ENCODE measurements at regions of chr20 and their contacts with region 1.

Region 1: GRCh38 chr20:37202267-37202943 is 23.1 kb upstream of the MROH8 start:
- DNase-seq: peak; percentile 77
- H3K4me3 ChIP-seq: no peak overlapping the region
- H3K27ac ChIP-seq: peak overlapping the region; percentile 64
- H3K4me1 ChIP-seq: peaks cover 7% of the 10 kb centered on the region
- H3K27me3 ChIP-seq: no peaks in the 10 kb centered on the region
- CTCF ChIP-seq: peak; percentile 80 to 88

Region 2: DNA sequence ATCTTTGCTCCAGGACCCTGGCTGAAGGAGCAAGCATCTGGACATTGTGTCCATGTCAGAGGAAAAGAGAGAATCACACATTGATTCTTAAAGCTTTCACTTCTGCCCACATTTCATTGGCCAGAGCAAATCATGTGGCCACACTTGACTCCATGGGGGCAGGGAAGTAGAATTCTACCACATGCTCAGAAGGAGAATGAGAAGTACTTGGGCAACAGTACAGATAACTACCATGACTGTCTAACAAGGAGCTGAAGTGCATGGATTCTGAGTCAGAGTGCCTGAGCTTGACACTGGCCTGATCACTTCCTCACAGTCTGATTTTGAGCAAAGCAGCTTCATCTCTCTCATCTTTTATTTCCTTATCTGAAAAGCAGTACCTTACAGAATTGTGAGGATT is 20.6 kb after region 1 on chr20:
- CTCF ChIA-PET with region 1: no interaction called
- dilution Hi-C with region 1: no loop called
- in situ Hi-C with region 1: no loop called
- intact Hi-C with region 1: loop called (anchors 2 kb)
- DNase-seq: peak; percentile 76
- H3K4me3 ChIP-seq: no peak overlapping the region
- H3K27ac ChIP-seq: no peak overlapping the region
- H3K4me1 ChIP-seq: peaks cover under 1% of the 10 kb centered on the region
- H3K27me3 ChIP-seq: no peaks in the 10 kb centered on the region
- CTCF ChIP-seq: no peak

Region 3: DNA sequence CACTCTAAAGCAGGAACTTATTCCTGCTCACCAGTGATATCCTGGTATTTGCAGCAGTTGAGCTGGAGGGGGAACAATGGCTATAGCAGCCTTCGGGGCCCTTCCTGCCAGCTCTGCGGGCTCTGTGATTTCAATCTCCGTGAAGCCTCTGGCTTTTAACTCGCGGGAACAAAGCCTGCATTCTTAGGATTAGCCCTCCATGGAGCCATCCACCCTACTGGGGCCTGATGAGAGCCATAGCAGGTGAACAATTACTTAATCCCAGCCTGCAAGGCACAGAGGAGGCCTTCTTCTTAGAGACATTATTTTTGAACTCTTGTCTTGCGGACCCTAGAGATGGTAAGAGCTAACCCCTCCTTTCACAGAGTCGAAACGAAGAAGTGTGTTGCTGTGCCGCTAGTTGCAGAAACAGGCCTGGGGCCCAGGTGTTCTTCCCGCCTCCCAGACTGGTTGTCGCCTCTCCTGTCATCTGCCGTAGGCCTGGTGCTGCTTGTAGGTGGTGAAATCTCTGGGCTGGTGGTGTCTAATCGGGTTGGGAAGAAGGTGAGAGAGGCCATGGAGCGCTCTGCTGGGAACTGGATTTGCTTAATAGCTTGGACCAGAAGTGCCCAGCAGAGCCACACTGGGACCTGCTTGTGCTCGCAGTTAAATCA is 49.5 kb after region 1 on chr20:
- CTCF ChIA-PET with region 1: no interaction called
- dilution Hi-C with region 1: loop called (anchors 5 kb)
- in situ Hi-C with region 1: no loop called
- intact Hi-C with region 1: no loop called
- DNase-seq: no peak
- H3K4me3 ChIP-seq: no peak overlapping the region
- H3K27ac ChIP-seq: no peak overlapping the region
- H3K4me1 ChIP-seq: no peaks in the 10 kb centered on the region
- H3K27me3 ChIP-seq: no peaks in the 10 kb centered on the region
- CTCF ChIP-seq: no peak

Region 4: DNA sequence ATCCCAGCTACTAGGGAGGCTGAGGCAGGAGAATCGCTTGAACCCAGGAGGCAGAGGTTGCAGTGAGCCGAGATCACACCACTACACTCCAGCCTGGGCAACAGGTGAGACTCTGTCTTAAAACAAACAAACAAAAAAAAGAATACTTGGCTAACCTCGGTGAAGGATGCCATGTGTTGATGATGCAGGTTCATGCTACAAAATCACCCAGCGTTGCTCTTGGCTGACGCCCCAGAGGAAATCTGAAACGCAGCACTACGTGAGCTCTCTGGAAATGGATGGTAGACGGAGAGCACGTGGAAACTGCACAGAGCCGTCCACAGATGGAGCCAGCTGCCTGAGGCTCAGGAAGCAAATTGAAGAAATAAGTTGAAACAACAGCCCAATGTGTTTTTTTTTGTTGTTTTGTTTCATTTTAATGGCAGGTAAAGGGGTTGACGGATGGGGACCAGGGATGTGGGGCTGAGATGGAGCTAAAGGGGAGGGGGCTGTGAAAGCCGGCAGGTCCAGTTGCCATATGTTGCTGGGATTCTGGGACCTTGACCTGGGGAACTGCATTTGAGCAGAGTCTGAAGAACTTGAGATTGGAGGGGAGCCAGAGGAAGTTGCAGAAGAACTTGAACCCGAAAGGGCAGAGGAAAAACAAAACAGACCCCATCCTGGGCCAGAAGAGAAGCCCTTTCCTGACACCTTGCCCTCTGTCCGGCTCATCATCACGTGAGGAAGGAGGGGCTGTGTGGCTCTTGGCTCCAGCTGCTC is 74.3 kb after region 1 on chr20:
- CTCF ChIA-PET with region 1: no interaction called
- dilution Hi-C with region 1: no loop called
- in situ Hi-C with region 1: no loop called
- intact Hi-C with region 1: no loop called
- DNase-seq: peak; percentile 66
- H3K4me3 ChIP-seq: no peak overlapping the region
- H3K27ac ChIP-seq: no peak overlapping the region
- H3K4me1 ChIP-seq: peaks cover 4% of the 10 kb centered on the region
- H3K27me3 ChIP-seq: no peaks in the 10 kb centered on the region
- CTCF ChIP-seq: peak; percentile 28 to 45

Measured in mammary epithelial cell (primary cell).